CD8-positive, alpha-beta T cell (primary cell): ENCODE measurements at regions of chr4 and their contacts with region 1.

Region 1: DNA sequence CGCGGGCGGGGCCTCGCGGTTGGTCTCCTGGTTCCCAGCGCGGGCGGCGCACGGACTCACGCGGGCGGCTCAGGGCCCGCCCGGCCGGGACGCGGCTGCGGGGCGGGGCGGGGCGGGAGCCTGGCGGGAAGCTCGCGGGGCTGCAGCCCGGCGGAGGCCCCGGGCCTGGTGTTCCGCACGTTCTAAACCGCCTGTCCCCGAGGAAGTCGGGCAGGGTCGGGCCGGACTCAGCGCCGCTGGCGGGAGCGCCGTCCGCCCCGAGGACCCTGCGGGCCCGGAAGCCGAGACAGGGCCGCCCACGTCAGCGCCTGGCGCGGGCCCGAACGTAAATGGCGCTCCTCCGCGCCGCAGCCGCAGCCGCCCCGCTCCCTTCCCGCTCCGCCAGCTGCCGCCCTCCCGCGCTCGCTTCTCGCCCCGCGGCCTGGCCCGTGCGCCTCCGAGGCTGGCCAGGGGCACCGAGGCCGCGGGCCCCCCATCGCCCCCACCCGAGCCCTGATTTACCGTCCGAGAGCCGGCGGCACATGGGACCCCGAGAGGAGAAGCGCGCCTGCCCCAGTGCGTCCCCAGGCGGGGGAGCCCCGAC is 309 bp upstream of the CTBP1 start:
- DNase-seq: peak; percentile 71 to 94 (median 85)
- ATAC-seq: peak; percentile 66
- H3K4me3 ChIP-seq: peak overlapping the region; percentile 76 to 82
- H3K4me3 Mint-ChIP-seq: peak overlapping the region; percentile 89
- H3K27ac ChIP-seq: peak overlapping the region; percentile 86 to 93
- H3K27ac Mint-ChIP-seq: peak overlapping the region; percentile 95
- H3K4me1 ChIP-seq: peaks cover 72% of the 10 kb centered on the region
- H3K4me1 Mint-ChIP-seq: peaks cover 69% of the 10 kb centered on the region
- H3K27me3 ChIP-seq: no peaks in the 10 kb centered on the region
- H3K27me3 Mint-ChIP-seq: no peaks in the 10 kb centered on the region
- CTCF ChIP-seq: no peak

Region 2: GRCh38 chr4:1055721-1056590 is 193.3 kb before region 1 on chr4:
- CTCF ChIA-PET with region 1: no interaction called
- POLR2A ChIA-PET with region 1: interaction called, 4 read pairs
- intact Hi-C with region 1: loop called in 1 of 2 experiments (anchors 5 kb)
- DNase-seq: peak; percentile 76 to 96 (median 85)
- ATAC-seq: peak; percentile 94
- H3K4me3 ChIP-seq: peak overlapping the region; percentile 42 to 48
- H3K4me3 Mint-ChIP-seq: peak overlapping the region; percentile 72
- H3K27ac ChIP-seq: peak overlapping the region; percentile 70 to 76
- H3K27ac Mint-ChIP-seq: peak overlapping the region; percentile 92
- H3K4me1 ChIP-seq: peaks cover 16% of the 10 kb centered on the region
- H3K4me1 Mint-ChIP-seq: peaks cover 18% of the 10 kb centered on the region
- H3K27me3 ChIP-seq: no peaks in the 10 kb centered on the region
- H3K27me3 Mint-ChIP-seq: no peaks in the 10 kb centered on the region
- CTCF ChIP-seq: no peak

Region 3: DNA sequence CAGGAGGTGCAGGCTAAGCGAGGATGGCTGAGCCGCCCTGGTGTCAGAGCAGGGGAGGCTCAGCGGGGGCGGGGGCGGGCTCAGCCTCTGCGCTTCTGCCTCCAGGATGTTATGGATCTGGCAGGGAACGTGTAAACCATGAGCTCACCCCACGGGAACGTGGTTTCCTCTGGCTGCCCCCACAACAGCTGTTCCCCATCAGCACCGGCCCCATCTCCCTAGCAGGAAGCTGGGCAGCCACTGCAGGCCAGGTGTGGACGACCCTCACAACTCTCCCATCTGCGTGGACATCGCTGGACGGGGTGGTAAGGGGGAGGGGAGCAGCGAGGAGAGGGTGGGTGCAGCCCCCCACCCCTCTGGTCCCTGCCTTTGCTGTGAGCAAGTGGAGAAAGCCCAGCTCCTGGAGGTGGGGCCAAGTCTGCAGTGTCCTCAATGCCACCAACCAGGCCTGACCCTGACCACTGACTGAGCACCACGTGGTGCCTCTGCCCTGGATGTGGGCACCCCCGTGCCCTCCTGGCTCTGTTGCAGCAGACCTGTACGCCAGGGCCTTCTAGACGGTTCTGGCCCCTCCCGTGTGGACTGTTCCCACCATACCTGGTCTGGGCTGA is 48.7 kb before region 1 on chr4:
- CTCF ChIA-PET with region 1: no interaction called
- POLR2A ChIA-PET with region 1: interaction called, 35 read pairs
- intact Hi-C with region 1: loop called (anchors 1 kb)
- DNase-seq: peak in 6 of 9 experiments; percentile 25 to 71 (median 54)
- ATAC-seq: no peak
- H3K4me3 ChIP-seq: peak overlapping the region; percentile 69 to 90
- H3K4me3 Mint-ChIP-seq: peak overlapping the region; percentile 87
- H3K27ac ChIP-seq: peak overlapping the region; percentile 87 to 91
- H3K27ac Mint-ChIP-seq: peak overlapping the region; percentile 95
- H3K4me1 ChIP-seq: peaks cover 47% of the 10 kb centered on the region
- H3K4me1 Mint-ChIP-seq: peaks cover 53% of the 10 kb centered on the region
- H3K27me3 ChIP-seq: no peaks in the 10 kb centered on the region
- H3K27me3 Mint-ChIP-seq: no peaks in the 10 kb centered on the region
- CTCF ChIP-seq: no peak

Region 4: GRCh38 chr4:1289207-1290164 is 40.2 kb after region 1 on chr4 and contains the start of gene MAEA:
- CTCF ChIA-PET with region 1: no interaction called
- POLR2A ChIA-PET with region 1: interaction called, 20 read pairs
- intact Hi-C with region 1: loop called (anchors 1 kb)
- DNase-seq: peak; percentile 94 to 98 (median 96)
- ATAC-seq: peak; percentile 97
- H3K4me3 ChIP-seq: peak within 1 kb of the TSS; percentile 57 to 92
- H3K4me3 Mint-ChIP-seq: peak within 1 kb of the TSS; percentile 92
- H3K27ac ChIP-seq: peak within 1 kb of the TSS; percentile 74 to 80
- H3K27ac Mint-ChIP-seq: peak within 1 kb of the TSS; percentile 91
- H3K4me1 ChIP-seq: peaks cover 38% of the 10 kb centered on the region
- H3K4me1 Mint-ChIP-seq: peaks cover 42% of the 10 kb centered on the region
- H3K27me3 ChIP-seq: no peaks in the 10 kb centered on the region
- H3K27me3 Mint-ChIP-seq: no peaks in the 10 kb centered on the region
- CTCF ChIP-seq: no peak
- total RNA-seq, gene MAEA: 74.6 to 77.6 TPM

Region 5: GRCh38 chr4:1712216-1713002 is 463.2 kb after region 1 on chr4 and contains the start of gene SLBP:
- CTCF ChIA-PET with region 1: no interaction called
- POLR2A ChIA-PET with region 1: interaction called, 3 read pairs
- intact Hi-C with region 1: loop called in 1 of 2 experiments (anchors 5 kb)
- DNase-seq: peak; percentile 96 to 99 (median 99)
- ATAC-seq: peak; percentile 87
- H3K4me3 ChIP-seq: peak within 1 kb of the TSS; percentile 82 to 95
- H3K4me3 Mint-ChIP-seq: peak within 1 kb of the TSS; percentile 94
- H3K27ac ChIP-seq: peak within 1 kb of the TSS; percentile 95 to 97
- H3K27ac Mint-ChIP-seq: peak within 1 kb of the TSS; percentile 94
- H3K4me1 ChIP-seq: peaks cover 42% of the 10 kb centered on the region
- H3K4me1 Mint-ChIP-seq: peaks cover 60% of the 10 kb centered on the region
- H3K27me3 ChIP-seq: no peaks in the 10 kb centered on the region
- H3K27me3 Mint-ChIP-seq: no peaks in the 10 kb centered on the region
- CTCF ChIP-seq: no peak
- total RNA-seq, gene SLBP: 61.2 to 62.6 TPM

Region 6: DNA sequence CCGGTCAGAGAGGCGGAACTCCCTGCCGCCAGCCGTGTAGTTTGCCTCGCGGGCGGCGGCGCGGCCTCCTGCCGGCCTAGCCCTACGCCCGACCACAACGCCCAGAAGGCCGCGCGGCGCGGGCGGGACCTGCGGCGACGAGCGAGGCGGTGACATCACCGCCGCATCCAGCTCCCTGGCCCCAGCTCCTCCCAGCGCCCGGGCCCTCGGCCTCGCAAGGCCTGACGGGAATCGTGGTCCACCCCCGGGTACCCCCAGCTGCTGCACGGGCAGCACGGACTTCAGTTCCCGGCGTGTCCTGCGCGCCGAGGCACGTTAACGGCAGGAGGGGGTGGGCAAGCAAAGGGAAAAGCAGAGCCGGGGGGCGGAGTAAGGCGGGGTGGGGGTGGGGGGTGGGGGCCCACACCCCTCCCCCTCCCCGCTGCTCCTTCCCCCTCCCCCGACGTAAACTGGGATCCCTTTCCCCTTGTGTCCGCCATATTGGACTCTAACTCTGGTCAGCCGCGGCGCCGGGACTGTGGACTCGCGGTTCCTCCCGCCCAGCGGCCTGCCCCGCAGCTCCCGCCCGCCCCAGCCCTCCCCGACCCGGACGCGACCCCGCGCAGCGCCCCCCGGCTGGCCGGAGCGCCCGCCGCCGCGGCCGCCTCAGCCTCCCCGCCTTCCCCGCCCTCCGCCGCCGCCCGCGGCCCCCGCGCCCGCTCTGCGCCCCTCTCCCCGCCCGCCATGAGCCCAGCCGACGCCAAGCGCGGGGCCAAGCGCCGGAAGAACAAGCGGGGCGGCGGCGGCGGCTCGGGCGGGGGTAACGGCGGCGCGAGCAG is 1287.2 kb after region 1 on chr4 and contains the start of gene FAM193A:
- CTCF ChIA-PET with region 1: no interaction called
- POLR2A ChIA-PET with region 1: no interaction called
- intact Hi-C with region 1: loop called in 1 of 2 experiments (anchors 5 kb)
- DNase-seq: peak; percentile 97 to 100 (median 99)
- ATAC-seq: peak; percentile 94
- H3K4me3 ChIP-seq: peak within 1 kb of the TSS; percentile 64 to 67
- H3K4me3 Mint-ChIP-seq: peak within 1 kb of the TSS; percentile 90
- H3K27ac ChIP-seq: peak within 1 kb of the TSS; percentile 71 to 76
- H3K27ac Mint-ChIP-seq: peak within 1 kb of the TSS; percentile 92
- H3K4me1 ChIP-seq: peaks cover 26% of the 10 kb centered on the region
- H3K4me1 Mint-ChIP-seq: peaks cover 29% of the 10 kb centered on the region
- H3K27me3 ChIP-seq: no peaks in the 10 kb centered on the region
- H3K27me3 Mint-ChIP-seq: no peaks in the 10 kb centered on the region
- CTCF ChIP-seq: no peak
- total RNA-seq, gene FAM193A: 29.0 to 30.2 TPM